Astrocyte of the cerebellum (primary cell): ENCODE measurements at regions of chr5 and their contacts with region 1.

Region 1: DNA sequence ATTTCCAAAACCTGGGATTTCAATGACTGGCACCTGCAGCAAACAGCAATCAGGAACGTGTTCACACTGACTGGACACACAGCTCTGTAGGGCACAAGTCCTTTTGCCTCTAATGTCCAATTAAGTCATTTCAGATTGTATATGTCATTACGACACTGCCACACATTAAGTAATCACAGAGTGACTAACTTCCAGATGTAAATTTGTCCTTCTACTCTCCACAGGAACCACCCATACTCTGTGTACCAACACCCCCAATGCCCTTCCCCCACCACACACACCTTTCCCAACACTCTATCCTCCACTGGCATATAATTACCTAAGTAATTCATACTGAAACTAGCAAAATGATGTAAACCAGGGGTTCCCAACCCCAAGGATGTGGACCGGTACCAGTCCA is 30.5 kb downstream of the LARS1 start:
- DNase-seq: no peak
- H3K4me3 ChIP-seq: no peak overlapping the region
- CTCF ChIP-seq: no peak

Region 2: DNA sequence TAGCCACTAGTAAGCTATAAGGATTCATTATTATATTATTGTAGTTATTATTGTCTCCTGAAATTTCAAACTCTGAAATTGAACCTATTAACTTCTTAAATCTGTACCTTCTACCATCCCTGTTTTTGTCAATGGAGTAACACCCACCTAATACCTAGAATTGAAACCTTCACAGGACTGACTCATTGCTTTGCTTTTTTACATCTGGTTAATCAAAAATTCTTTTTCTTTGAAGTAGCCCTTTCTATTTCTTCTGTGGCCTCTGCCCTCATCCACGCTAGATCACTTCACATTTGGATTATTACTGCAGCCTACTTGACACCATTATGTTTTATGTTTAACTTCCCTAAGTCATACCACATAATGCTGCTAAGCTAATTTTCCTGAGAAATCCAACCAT is 87.0 kb after region 1 on chr5:
- in situ Hi-C with region 1: loop called (anchors 10 kb)
- DNase-seq: no peak
- H3K4me3 ChIP-seq: no peak overlapping the region
- CTCF ChIP-seq: no peak

Region 3: DNA sequence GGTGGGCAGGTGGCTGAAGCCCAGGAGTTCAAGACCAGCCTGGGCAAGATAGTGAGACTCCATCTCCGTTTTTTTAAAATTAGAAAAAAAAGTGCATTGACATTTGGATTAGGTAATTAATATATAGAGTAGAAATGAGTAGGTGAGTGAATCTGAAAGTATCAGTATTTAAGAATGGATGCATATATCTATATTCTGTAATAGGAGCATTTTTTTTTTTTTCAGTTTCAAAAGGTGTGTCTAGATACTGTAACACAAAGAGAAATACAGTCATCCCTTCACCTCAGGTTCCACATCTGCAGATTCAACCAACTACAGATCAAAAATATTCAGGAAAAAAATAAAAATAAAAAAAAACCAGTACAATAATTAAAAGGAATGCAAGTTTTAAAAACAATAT is 102.3 kb after region 1 on chr5:
- in situ Hi-C with region 1: no loop called
- DNase-seq: no peak
- H3K4me3 ChIP-seq: no peak overlapping the region
- CTCF ChIP-seq: no peak

Region 4: GRCh38 chr5:146947181-146947941 is 795.4 kb after region 1 on chr5:
- in situ Hi-C with region 1: no loop called
- DNase-seq: no peak
- H3K4me3 ChIP-seq: no peak overlapping the region
- CTCF ChIP-seq: peak; percentile 25